Endothelial cell of umbilical vein (primary cell): ENCODE measurements at regions of chr13 and their contacts with region 1.

Region 1: DNA sequence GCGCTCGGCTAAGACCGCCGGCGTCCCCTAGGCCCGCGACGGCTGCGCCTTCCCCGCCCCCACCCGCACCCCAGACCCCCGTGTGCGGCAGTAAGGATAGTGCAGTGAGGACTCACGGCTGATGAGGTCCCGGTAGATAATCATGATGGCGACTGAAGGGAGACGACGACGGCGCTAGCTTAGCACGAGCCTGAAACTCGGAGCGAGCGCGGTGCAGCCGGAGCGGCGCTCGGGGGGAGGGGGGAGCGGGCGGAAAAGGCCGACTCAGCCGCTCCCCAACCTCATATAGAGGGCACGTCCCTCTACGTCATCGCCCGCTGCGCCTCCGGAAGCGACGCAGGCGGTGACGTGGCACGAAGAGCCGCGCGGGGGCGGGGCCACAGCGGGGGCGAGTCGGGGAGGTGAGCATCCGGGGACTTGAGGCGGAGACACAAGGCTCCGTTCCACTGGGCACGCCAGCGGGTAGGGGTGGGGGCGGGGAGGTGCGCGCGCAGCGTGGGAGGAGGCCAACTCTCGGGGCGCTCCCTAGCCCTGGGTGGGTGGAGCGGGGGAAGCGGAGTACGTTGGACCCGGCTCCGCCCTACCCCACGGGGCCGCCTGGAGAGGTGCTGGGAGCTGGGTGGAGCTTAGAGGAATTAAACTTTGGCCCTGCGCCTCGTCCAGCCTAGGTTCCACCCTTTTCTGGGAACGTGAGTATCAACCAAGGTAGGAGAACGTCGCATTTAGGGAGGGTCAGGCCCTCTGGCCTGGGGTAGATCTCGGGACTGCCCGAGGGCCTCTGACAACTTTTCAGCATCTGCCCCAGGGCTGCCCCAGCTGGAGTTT is at the start of gene TPT1:
- DNase-seq: peak; percentile 99
- H3K4me3 ChIP-seq: peak within 1 kb of the TSS; percentile 84 to 99 (median 95)
- H3K27ac ChIP-seq: peak within 1 kb of the TSS; percentile 91
- H3K4me1 ChIP-seq: peaks cover 42% of the 10 kb centered on the region
- H3K27me3 ChIP-seq: no peaks in the 10 kb centered on the region
- CTCF ChIP-seq: no peak
- POLR2A ChIP-seq: peak; percentile 97
- total RNA-seq, gene TPT1: 2,923 and 2,993 TPM in 2 replicates

Region 2: GRCh38 chr13:45310341-45311125 is 30.6 kb before region 1 on chr13:
- CTCF ChIA-PET with region 1: interaction called, 6 read pairs
- POLR2A ChIA-PET with region 1: no interaction called
- dilution Hi-C with region 1: no loop called
- intact Hi-C with region 1: loop called (anchors 1 kb)
- DNase-seq: no peak
- H3K4me3 ChIP-seq: peak overlapping the region in 1 of 3 experiments; percentile 15
- H3K27ac ChIP-seq: no peak overlapping the region
- H3K4me1 ChIP-seq: peaks cover 10% of the 10 kb centered on the region
- H3K27me3 ChIP-seq: peaks cover 0 to 2% of the 10 kb centered on the region in 2 experiments
- CTCF ChIP-seq: no peak
- POLR2A ChIP-seq: no peak

Region 3: GRCh38 chr13:45325806-45326205 is 15.3 kb before region 1 on chr13:
- CTCF ChIA-PET with region 1: interaction called, 15 read pairs
- POLR2A ChIA-PET with region 1: interaction called, 38 read pairs
- dilution Hi-C with region 1: no loop called
- intact Hi-C with region 1: loop called (anchors 1 kb)
- DNase-seq: peak; percentile 86
- H3K4me3 ChIP-seq: no peak overlapping the region
- H3K27ac ChIP-seq: peak overlapping the region; percentile 31
- H3K4me1 ChIP-seq: peaks cover 32% of the 10 kb centered on the region
- H3K27me3 ChIP-seq: no peaks in the 10 kb centered on the region
- CTCF ChIP-seq: no peak
- POLR2A ChIP-seq: no peak

Region 4: GRCh38 chr13:45417790-45418534 is 76.8 kb after region 1 on chr13 and contains the start of gene SLC25A30:
- CTCF ChIA-PET with region 1: interaction called, 3 read pairs
- POLR2A ChIA-PET with region 1: no interaction called
- dilution Hi-C with region 1: no loop called
- intact Hi-C with region 1: loop called (anchors 1 kb)
- DNase-seq: peak; percentile 94
- H3K4me3 ChIP-seq: peak within 1 kb of the TSS; percentile 66 to 87 (median 79)
- H3K27ac ChIP-seq: peak within 1 kb of the TSS; percentile 56
- H3K4me1 ChIP-seq: peaks cover 24% of the 10 kb centered on the region
- H3K27me3 ChIP-seq: no peaks in the 10 kb centered on the region
- CTCF ChIP-seq: no peak
- POLR2A ChIP-seq: peak; percentile 78
- total RNA-seq, gene SLC25A30: 27.0 and 28.9 TPM in 2 replicates

Region 5: DNA sequence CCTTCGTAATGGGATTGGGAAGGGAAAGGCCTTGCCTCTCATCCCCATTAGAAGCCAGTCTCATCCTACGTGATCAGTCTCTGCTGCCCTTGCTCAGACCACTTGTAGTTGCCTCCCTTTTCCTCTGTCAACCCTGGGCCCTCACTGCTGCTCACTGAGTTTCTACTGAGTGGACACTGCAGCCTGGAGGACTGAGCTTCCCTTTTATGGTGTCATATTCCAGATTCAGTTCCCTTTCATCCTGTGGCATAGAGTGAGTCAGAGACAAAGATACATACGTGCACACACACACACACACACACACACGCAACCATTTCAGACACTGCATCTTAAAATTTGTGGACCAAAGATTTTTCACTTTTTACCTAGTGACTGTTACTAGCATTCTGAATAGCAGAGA is 180.2 kb after region 1 on chr13:
- CTCF ChIA-PET with region 1: no interaction called
- POLR2A ChIA-PET with region 1: no interaction called
- dilution Hi-C with region 1: no loop called
- intact Hi-C with region 1: no loop called
- DNase-seq: no peak
- H3K4me3 ChIP-seq: no peak overlapping the region
- H3K27ac ChIP-seq: no peak overlapping the region
- H3K4me1 ChIP-seq: no peaks in the 10 kb centered on the region
- H3K27me3 ChIP-seq: no peaks in the 10 kb centered on the region
- CTCF ChIP-seq: no peak
- POLR2A ChIP-seq: no peak

Region 6: DNA sequence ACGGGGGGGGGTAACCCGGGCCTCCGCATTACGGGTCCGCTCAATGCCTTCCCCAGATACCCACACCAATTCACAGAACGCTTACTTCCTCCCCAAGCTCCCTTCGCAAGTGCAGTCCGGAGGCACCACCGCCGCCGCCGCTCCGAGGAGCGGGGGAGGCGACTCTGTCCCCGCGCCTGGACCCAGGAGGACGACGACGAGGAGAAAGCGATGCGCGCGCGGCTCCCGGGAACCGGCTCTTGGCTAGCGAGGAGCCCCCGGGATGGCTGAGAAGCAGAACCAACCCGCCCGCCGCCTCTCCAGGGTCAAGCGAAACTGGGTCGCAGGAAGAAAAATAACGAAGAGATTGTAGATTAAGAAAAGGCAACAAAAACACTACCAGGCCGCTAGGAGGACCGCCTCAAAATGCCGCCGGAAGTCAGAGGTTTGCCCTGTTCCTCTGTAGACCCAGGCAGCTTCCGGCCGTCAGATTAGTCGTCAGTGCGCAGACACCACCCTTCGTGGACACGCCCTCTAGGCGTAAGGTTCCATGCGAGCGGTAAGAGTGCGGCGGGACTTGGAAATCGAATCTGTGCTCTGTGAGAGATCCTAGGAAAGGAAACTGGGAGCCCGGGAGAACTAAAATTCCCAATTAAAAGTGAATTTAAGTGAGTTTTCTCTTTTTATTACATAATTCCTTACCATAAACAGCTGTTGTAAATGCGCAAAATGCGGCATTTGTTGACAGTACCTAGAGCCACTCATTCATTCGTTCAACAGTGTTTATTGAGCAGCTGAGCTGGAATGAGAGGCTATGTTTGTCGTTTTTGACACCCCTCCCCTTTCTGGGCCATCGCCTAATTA is 711.4 kb after region 1 on chr13 and contains the start of gene ZC3H13:
- CTCF ChIA-PET with region 1: no interaction called
- POLR2A ChIA-PET with region 1: no interaction called
- dilution Hi-C with region 1: no loop called
- intact Hi-C with region 1: loop called (anchors 5 kb)
- DNase-seq: peak; percentile 93
- H3K4me3 ChIP-seq: peak within 1 kb of the TSS; percentile 83 to 98 (median 96)
- H3K27ac ChIP-seq: peak within 1 kb of the TSS; percentile 86
- H3K4me1 ChIP-seq: peaks cover 26% of the 10 kb centered on the region
- H3K27me3 ChIP-seq: no peaks in the 10 kb centered on the region
- CTCF ChIP-seq: peak; percentile 8 to 15
- POLR2A ChIP-seq: peak; percentile 67
- total RNA-seq, gene ZC3H13: 32.0 and 36.6 TPM in 2 replicates